Heart left ventricle (tissue), 16 donors: ENCODE measurements at regions of chr10 and their contacts with region 1.

Region 1: DNA sequence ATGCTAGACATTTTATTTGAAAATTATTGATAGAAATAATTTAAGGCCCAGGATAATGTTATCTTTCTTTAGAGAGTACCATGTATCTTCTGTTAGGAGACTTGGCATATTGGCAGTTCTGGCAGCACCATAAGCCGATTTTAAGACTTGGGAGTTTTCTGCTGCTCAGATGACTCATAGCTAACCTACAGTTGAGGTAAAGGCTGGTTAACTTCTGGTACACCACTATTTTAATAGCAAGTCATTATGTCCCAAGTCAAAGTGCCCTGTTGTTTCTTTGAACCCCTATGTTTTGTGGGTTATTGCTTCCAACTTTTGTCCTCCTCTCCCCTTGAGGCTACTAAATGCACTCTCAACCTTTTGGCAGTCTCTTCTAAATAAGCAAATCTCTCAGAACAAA is 25.2 kb downstream of the ATRNL1 start:
- DNase-seq: no peak
- ATAC-seq: no peak
- H3K4me3 ChIP-seq: no peak overlapping the region
- H3K27ac ChIP-seq: no peak overlapping the region
- H3K4me1 ChIP-seq: no peaks in the 10 kb centered on the region
- H3K27me3 ChIP-seq: peaks cover 0 to 5% (median 0%) of the 10 kb centered on the region in 9 donors
- CTCF ChIP-seq: no peak
- POLR2A ChIP-seq: no peak

Region 2: DNA sequence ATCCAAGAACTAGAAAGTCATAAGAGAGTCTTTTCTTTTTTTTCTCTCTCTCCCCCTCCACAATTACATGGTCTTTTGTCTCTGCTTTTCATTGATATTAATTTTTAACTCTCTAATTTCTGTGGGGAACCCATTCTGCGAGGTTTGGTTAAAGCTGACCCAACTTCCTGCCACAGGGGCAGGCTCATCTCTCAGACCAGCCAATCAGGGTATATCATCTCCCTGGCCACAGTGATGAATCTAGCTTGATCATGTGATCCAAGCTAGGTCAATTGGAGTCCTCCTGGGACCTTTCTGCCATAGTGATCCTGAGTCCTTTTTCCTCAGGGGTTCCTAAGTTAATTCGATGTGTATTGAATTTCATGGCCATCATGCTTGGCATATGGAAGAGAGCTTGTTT is 218.4 kb before region 1 on chr10:
- intact Hi-C with region 1: loop called in 1 of 10 experiments (anchors 5 kb)
- DNase-seq: no peak
- ATAC-seq: no peak
- H3K4me3 ChIP-seq: no peak overlapping the region
- H3K27ac ChIP-seq: no peak overlapping the region
- H3K4me1 ChIP-seq: no peaks in the 10 kb centered on the region
- H3K27me3 ChIP-seq: peaks cover 0 to 3% (median 0%) of the 10 kb centered on the region in 9 donors
- CTCF ChIP-seq: no peak
- POLR2A ChIP-seq: no peak

Region 3: DNA sequence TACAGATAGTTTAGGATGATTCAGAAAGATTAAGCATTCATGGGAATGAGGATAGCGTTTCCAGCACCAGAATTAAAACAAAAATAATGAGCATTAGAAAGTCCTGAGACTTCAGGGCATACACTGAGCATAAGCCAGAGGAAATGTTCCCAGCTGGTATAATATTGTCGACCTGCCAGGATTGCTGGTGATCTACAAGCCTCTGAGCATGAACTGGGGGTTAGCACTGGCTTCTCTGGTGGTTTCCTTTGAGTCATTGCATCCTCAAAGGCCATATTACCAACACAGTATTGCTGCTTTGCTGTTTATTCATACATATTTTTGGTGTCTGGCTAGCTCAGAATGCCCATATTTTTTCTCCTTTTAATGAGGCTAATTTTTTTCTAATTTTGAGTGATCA is 35.8 kb before region 1 on chr10:
- intact Hi-C with region 1: no loop called
- DNase-seq: no peak
- ATAC-seq: peak in 1 of 4 donors; percentile 27
- H3K4me3 ChIP-seq: no peak overlapping the region
- H3K27ac ChIP-seq: no peak overlapping the region
- H3K4me1 ChIP-seq: peaks cover 0 to 5% (median 0%) of the 10 kb centered on the region in 12 donors
- H3K27me3 ChIP-seq: no peaks in the 10 kb centered on the region
- CTCF ChIP-seq: no peak
- POLR2A ChIP-seq: no peak

Region 4: GRCh38 chr10:115727129-115727528 is 608.8 kb after region 1 on chr10:
- intact Hi-C with region 1: no loop called
- DNase-seq: no peak
- ATAC-seq: no peak
- H3K4me3 ChIP-seq: no peak overlapping the region
- H3K27ac ChIP-seq: no peak overlapping the region
- H3K4me1 ChIP-seq: no peaks in the 10 kb centered on the region
- H3K27me3 ChIP-seq: no peaks in the 10 kb centered on the region
- CTCF ChIP-seq: no peak
- POLR2A ChIP-seq: no peak